Heart right ventricle (tissue), 16 donors: ENCODE measurements at regions of chr16 and their contacts with region 1.

Region 1: GRCh38 chr16:23435500-23435899 is 17.5 kb downstream of the COG7 start:
- DNase-seq: peak; percentile 28 to 41
- ATAC-seq: peak; percentile 55 to 77 (median 69)
- H3K4me3 ChIP-seq: no peak overlapping the region
- H3K27ac ChIP-seq: peak overlapping the region in 1 of 10 donors; percentile 27
- H3K4me1 ChIP-seq: peaks cover 0 to 16% (median 0%) of the 10 kb centered on the region in 9 donors
- H3K27me3 ChIP-seq: no peaks in the 10 kb centered on the region
- CTCF ChIP-seq: peak; percentile 61 to 87 (median 76)

Region 2: DNA sequence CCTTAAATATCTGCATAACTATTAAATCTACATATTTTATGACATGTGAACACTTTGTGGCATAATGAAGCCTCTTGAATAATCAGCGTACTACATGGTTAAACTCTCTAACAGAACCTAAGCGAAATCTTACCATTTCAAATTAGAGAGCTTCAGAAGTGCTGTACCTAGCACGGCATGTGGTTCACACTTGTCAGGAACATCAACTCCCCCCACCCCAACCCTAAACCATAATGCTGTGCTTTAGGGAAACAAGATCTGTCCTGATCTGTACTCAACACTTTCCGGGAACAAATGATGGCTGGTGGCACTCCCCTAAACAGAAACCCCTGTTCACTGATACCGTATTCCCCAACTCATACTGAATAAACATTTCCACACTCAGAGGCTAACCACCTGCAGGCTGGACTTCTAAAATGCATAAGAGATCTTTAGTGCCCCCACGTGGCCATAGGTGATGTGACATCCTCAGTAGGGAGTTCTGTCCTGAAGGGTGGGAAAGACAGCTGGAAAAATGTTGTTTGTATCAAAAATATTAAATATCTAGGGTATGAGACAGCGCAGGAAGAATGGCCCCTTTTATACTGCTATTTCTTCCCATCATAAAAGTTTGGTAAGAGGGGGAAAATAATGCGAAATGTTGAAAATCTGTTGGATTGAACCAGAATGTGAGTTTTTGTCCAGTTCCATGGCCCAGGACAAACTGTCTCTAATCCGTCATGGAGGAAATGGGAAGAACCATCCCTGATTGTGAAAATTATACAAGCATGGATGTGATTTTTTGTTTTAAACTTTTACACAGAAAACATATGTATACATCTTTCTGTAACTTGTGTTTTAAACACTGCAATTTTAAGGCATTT is 374.8 kb before region 1 on chr16:
- intact Hi-C with region 1: loop called in 1 of 10 experiments (anchors 10 kb)
- DNase-seq: peak in 1 of 2 donors; percentile 71
- ATAC-seq: peak; percentile 65 to 89 (median 82)
- H3K4me3 ChIP-seq: no peak overlapping the region
- H3K27ac ChIP-seq: no peak overlapping the region
- H3K4me1 ChIP-seq: peaks cover 0 to 13% (median 8%) of the 10 kb centered on the region in 9 donors
- H3K27me3 ChIP-seq: no peaks in the 10 kb centered on the region
- CTCF ChIP-seq: peak; percentile 63 to 90 (median 85)

Region 3: GRCh38 chr16:23081675-23082119 is 353.8 kb before region 1 on chr16:
- intact Hi-C with region 1: loop called in 1 of 10 experiments (anchors 10 kb)
- DNase-seq: no peak
- ATAC-seq: peak in 6 of 8 donors; percentile 19 to 80 (median 58)
- H3K4me3 ChIP-seq: no peak overlapping the region
- H3K27ac ChIP-seq: peak overlapping the region in 2 of 10 donors; percentile 22 to 51
- H3K4me1 ChIP-seq: peaks cover 0 to 41% (median 8%) of the 10 kb centered on the region in 9 donors
- H3K27me3 ChIP-seq: no peaks in the 10 kb centered on the region
- CTCF ChIP-seq: no peak

Region 4: DNA sequence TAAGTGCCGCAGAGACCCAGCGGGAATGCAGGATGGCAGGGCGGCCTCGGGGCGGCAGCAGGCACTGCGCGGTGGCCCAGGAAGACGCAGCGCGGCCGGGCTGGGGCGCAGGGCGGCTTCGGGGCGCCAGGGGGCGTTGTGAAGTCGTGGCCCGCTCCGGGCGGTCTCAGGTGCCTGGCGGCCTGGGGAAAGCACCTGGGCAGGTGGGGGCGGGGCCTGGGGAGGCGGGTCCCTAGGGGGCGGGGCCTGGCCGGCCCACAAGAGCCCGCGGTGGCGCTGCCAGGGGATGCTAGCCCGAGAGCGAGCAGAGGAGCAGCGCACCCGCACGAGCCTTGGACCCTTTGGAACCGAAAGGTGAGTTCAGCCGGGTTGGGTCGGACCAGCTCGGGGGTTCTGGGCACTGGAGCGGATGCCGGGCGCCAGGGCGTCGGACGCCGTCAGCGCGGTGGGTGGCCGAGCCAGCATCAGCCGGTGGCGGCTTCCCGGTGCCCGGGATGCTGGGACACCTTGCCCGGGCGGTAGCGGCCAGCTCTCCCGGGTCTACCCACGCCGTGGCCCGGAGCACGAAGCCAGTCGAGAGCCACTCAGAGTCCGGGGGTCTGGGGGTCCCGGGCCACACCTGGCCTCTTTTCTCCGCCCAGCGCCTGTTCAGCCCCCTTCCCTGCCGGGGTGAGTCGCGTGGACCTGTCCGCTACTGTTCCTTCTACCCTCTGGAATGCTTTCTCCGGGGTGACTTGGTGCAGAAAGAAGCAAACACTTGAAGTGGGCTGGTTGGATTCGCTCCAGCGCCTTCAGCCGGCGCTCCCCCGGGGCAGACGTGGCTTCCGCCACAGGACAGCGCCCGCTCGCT is 252.8 kb before region 1 on chr16 and contains the start of gene SCNN1G:
- intact Hi-C with region 1: loop called (anchors 1 to 5 kb)
- DNase-seq: peak; percentile 63 to 76
- ATAC-seq: peak; percentile 92 to 97 (median 96)
- H3K4me3 ChIP-seq: peak within 1 kb of the TSS; percentile 27 to 55 (median 44)
- H3K27ac ChIP-seq: no peak within 1 kb of the TSS
- H3K4me1 ChIP-seq: peaks cover 7 to 26% (median 17%) of the 10 kb centered on the region in 9 donors
- H3K27me3 ChIP-seq: peaks cover 0 to 64% (median 54%) of the 10 kb centered on the region in 7 donors
- CTCF ChIP-seq: peak; percentile 22 to 97 (median 91)
- total RNA-seq, gene SCNN1G: 0.05 to 0.30 (median 0.12) TPM in 3 of 10 donors, not detected in the others